ENCODE measurements at regions of chr3 and their contacts with region 1.

Region 1: DNA sequence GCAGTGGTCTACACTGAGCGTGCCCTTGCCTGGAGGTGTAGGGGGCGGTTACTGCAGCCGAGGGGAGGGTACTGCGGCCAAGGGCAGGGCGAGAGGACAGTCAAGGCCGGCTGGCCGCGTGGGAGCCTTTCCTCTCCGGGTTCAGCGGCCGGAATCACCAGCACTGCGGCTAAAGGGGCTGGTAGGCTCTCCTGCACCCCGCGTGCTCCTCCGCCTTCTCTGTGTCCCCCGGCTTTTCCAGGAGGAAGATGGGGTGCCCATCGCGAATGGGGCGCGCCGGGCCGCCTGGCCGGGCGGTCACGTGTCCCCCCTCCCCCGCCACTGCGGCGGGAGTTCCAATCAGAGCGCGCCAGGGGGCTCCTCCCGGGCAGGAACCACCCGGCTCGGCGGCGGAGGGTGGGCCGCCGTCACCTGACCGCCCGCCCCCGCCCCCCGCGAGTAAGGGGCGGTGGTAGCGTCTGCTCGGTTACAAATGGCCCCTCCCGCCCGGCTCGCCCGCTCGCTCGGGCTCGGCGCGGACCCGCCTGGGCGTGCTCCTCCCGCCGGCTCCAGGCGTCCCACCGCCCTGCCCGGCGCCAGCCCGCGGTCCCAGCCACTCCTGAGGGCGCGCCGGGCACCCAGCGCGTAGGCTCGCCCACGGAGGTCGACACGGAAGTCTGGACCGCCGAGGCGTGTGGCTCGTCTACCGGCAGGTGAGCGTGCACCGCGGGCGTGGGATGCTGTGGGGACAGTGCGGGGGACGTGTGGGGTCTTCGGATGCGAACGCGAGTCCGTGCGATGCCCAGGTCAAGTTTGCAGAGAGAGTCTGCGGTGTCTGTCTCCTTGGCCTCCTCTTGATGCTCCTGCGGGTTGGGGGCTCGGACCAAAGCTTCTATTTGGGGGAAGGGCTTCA is 242.6 kb upstream of the TOPAZ1 start:
- DNase-seq: no peak
- ATAC-seq: peak; percentile 22
- H3K4me3 ChIP-seq: peak overlapping the region; percentile 83
- H3K27ac ChIP-seq: no peak overlapping the region; the same call in 1 of the 2 replicates
- H3K4me1 ChIP-seq: peaks cover 15% of the 10 kb centered on the region
- H3K27me3 ChIP-seq: peaks cover 16 to 18% of the 10 kb centered on the region in 2 experiments
- CTCF ChIP-seq: no peak
- EP300 ChIP-seq: no peak
- POLR2A ChIP-seq: peak; percentile 83
- RAD21 ChIP-seq: no peak

Region 2: DNA sequence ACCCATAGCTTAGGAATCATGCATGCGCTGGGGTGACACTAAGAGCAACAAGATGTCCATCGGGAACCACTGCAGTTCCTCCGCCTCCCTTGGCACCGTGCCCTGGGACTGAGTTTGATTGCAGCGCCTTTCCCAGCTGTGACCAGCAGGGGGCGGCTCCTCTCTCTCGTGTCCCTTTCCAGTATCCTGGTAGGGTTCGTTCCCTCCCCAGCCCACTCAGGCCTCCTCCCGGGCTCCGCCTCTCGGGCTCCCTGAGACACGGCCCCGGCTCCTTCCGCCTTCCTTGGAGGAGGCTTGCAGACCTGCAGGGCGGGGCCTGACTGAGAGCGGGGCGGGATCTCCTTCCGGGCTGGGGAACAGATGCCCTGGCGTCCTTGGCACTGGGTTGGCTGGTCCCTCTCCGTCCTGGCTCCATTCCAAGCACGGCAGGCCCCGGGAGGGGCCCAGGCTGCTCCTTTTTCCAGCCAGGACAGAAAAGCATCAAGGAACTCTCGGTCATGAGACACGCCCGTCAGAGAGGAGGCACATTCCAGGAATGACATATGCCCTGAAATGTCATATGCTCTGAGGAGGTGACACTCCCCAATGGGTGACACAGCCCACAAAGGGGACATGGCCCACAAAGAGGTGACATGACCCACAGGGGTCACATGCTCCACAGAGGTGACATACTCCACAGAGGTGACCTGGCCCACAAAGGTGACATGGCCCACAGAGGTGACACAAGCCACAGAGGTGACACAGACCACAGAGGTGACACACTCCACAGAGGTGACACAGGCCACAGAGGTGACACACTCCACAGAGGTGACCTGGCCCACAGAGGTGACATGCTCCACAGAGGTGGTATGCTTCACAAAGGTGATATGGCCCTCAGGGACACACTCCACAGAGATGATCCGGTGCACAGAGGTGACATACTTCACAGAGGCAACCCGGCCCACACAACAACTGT is 229.3 kb before region 1 on chr3:
- CTCF ChIA-PET with region 1: no interaction called
- POLR2A ChIA-PET with region 1: no interaction called
- RAD21 ChIA-PET with region 1: no interaction called
- SMC1A ChIA-PET with region 1: interaction called, 3 read pairs
- in situ Hi-C with region 1: no loop called
- intact Hi-C with region 1: loop called (anchors 10 kb)
- DNase-seq: peak; percentile 15
- ATAC-seq: peak; percentile 84
- H3K4me3 ChIP-seq: no peak overlapping the region
- H3K27ac ChIP-seq: no peak overlapping the region
- H3K4me1 ChIP-seq: no peaks in the 10 kb centered on the region
- H3K27me3 ChIP-seq: no peaks in the 10 kb centered on the region; a peak in 3 of 4 replicates
- CTCF ChIP-seq: peak; percentile 72 to 95 (median 93)
- EP300 ChIP-seq: no peak
- POLR2A ChIP-seq: no peak
- RAD21 ChIP-seq: peak; percentile 57

Region 3: GRCh38 chr3:43894176-43895049 is 104.7 kb before region 1 on chr3:
- CTCF ChIA-PET with region 1: interaction called, 3 read pairs
- POLR2A ChIA-PET with region 1: no interaction called
- RAD21 ChIA-PET with region 1: interaction called, 3 read pairs
- SMC1A ChIA-PET with region 1: no interaction called
- in situ Hi-C with region 1: no loop called
- intact Hi-C with region 1: loop called (anchors 5 kb)
- DNase-seq: no peak
- ATAC-seq: peak; percentile 85
- H3K4me3 ChIP-seq: peak overlapping the region; percentile 69; the same call in 1 of the 2 replicates
- H3K27ac ChIP-seq: no peak overlapping the region
- H3K4me1 ChIP-seq: peaks cover 18% of the 10 kb centered on the region
- H3K27me3 ChIP-seq: peaks cover 0 to 6% of the 10 kb centered on the region in 2 experiments; a peak in 3 of 4 replicates
- CTCF ChIP-seq: 0 out of 6 replicates have a peak, but pooled peaks of 1 of the 3 experiments have one; percentile 13
- EP300 ChIP-seq: no peak
- POLR2A ChIP-seq: no peak
- RAD21 ChIP-seq: no peak

Region 4: DNA sequence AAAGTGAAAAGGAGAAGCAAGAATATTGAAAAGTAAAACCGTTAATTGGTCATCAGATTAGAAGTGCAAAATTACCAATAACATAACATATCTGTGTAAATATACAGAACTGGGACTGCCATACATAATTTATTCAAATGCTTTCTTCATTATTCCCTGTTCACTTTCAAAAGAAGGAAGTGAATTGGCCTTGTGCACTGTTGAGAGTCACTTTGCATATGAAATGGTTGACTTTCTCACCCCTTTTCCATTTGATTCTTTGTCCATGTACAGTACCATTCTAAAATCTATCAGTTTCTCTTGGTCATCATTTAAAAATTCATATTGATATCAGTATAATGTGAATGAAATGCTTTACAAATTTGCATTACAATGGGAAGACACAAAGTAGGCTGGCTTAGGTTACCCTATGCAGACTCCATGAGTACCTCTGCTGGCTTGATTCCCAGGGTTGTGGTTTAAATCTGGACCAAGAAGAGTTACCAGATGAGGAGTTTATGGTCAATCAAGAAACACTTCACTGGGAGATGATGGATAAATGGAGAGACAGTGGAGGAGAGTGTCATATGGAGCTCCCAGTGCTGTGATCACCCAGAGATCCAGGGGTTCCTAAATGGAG is 31.7 kb after region 1 on chr3:
- CTCF ChIA-PET with region 1: no interaction called
- POLR2A ChIA-PET with region 1: interaction called, 10 read pairs
- RAD21 ChIA-PET with region 1: interaction called, 13 read pairs
- SMC1A ChIA-PET with region 1: interaction called, 87 read pairs
- in situ Hi-C with region 1: no loop called
- intact Hi-C with region 1: loop called (anchors 1 kb)
- DNase-seq: no peak
- ATAC-seq: no peak
- H3K4me3 ChIP-seq: peak overlapping the region; percentile 45; the same call in 1 of the 2 replicates
- H3K27ac ChIP-seq: peak overlapping the region; percentile 90
- H3K4me1 ChIP-seq: peaks cover 34% of the 10 kb centered on the region
- H3K27me3 ChIP-seq: no peaks in the 10 kb centered on the region
- CTCF ChIP-seq: no peak
- EP300 ChIP-seq: no peak
- POLR2A ChIP-seq: no peak
- RAD21 ChIP-seq: no peak

Region 5: DNA sequence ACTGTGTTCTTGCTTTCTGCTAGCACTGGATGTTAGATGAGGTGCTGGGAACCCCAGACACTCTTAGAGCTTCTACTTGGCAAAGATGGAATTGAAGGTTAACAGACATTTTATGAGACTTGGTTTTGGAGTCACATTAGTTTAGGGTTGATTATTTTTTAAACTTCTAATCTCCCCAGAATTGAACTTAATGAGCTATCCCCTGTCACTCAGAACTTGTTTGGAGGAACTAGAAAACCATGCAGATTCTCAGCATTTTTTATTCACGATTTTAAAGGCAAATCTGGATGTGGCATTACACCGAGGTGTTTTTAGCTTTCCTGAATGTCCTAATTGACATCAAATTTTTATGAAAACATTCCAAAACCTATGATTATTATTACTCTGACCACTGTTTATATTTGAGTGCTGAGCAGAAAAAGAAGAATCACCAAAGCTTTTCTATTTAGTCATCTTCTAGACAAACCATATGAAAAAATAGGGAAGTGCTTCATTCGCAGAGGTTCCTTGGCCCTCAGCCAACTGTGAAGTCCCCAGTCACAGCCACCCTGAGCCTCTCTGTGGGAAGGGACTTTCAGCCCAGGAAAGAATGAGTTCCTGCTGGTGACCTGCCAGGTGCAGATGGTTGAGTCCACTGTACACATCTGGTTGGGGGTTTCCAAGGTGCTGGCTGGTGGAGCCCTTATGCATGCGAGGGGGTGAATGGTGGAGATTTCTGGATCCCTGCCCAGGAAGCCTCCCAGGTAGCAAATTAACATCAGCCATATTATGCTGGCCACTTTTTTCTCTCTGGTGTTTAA is 46.6 kb after region 1 on chr3:
- CTCF ChIA-PET with region 1: interaction called, 4 read pairs
- POLR2A ChIA-PET with region 1: interaction called, 4 read pairs
- RAD21 ChIA-PET with region 1: interaction called, 20 read pairs
- SMC1A ChIA-PET with region 1: interaction called, 17 read pairs
- in situ Hi-C with region 1: no loop called
- intact Hi-C with region 1: loop called (anchors 2 kb)
- DNase-seq: peak; percentile 98
- ATAC-seq: peak; percentile 93
- H3K4me3 ChIP-seq: no peak overlapping the region
- H3K27ac ChIP-seq: peak overlapping the region; percentile 93
- H3K4me1 ChIP-seq: peaks cover 72% of the 10 kb centered on the region
- H3K27me3 ChIP-seq: no peaks in the 10 kb centered on the region
- CTCF ChIP-seq: no peak
- EP300 ChIP-seq: peak; percentile 81 to 90; a peak in 3 of 4 replicates
- POLR2A ChIP-seq: no peak
- RAD21 ChIP-seq: no peak

Region 6: DNA sequence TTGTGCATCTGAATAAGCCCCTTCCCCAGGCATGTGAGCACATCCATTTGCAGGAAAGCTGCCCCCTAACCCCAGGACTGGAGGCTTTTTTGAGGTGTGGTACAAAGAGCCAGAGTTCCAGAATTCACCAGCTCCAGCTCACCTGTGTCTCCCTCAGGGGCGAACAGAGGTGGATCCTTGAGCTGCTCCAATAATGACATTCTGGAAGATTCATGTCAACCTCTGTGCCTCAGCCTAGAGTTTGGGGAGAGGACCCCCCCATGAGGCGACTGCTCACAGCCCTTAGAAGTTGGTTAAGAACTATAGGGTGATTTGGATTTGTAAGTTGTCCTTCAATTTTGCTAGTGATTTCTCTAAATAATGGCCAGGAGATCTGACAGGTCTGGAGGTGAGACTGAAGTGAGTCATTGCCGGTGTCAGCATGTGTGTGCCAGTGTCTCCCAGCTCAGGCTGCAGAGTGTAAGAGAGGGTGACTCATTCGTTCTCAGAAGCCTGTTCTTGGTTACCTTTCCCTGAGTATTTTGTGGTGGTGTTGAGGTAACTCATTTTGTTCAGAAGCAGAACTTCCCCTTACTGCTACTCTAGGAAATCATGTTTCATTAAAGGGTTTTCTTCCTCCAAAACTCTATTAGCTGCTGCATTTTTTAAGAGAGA is 105.7 kb after region 1 on chr3:
- CTCF ChIA-PET with region 1: interaction called, 3 read pairs
- POLR2A ChIA-PET with region 1: interaction called, 4 read pairs
- RAD21 ChIA-PET with region 1: interaction called, 11 read pairs
- SMC1A ChIA-PET with region 1: interaction called, 7 read pairs
- in situ Hi-C with region 1: no loop called
- intact Hi-C with region 1: no loop called
- DNase-seq: peak; percentile 81
- ATAC-seq: peak; percentile 99
- H3K4me3 ChIP-seq: no peak overlapping the region
- H3K27ac ChIP-seq: peak overlapping the region; percentile 58; the same call in 1 of the 2 replicates
- H3K4me1 ChIP-seq: peaks cover 20% of the 10 kb centered on the region
- H3K27me3 ChIP-seq: no peaks in the 10 kb centered on the region; a peak in 1 of 4 replicates
- CTCF ChIP-seq: no peak
- EP300 ChIP-seq: peak in 1 of 2 experiments; percentile 49; a peak in 1 of 4 replicates
- POLR2A ChIP-seq: no peak
- RAD21 ChIP-seq: no peak

Region 7: DNA sequence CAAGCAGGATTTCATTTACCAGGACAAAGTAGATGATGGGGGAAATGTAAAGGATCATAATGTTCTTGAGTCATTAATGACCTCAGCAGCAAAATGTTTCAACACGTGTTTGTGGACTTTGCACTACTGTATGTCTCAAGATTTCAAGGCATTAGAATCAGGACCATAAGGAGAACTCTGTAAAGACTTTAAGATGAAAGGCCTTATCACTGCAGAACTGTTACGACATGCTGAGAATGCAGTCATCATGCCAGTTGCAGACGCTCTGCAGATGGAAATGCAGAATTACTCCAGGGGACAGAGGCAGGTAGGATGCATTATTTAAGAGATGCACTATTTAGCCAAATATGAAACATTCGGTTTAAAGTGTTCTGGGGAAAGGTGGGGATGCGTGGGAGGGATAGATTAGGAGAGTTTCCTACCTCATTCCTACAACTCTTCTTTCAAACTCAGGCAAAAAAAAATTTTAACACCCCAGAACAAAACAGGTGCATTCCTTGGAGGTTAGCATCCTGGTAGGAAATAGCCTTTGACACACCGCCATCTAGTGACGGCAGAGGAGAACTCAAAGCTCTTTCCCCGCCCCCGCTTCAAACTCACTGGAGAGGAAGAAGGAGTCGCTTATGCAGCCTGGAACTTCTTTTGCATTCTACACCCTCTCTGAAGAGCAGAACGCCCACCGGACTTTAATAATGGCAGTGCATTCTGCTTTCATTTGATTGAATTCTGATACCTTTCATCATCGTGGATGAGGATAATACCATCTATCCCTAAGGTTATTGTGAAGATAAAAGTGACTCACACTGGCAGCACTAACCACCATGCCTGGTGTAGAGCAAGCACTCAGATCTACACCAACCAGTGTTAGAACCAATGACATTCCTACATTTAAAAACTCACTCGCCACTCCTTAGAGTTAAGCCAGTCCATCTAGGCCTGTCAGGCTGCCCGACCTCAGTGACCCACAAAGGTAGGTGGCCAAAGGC is 199.5 kb after region 1 on chr3:
- CTCF ChIA-PET with region 1: interaction called, 12 read pairs
- POLR2A ChIA-PET with region 1: no interaction called
- RAD21 ChIA-PET with region 1: interaction called, 20 read pairs
- SMC1A ChIA-PET with region 1: interaction called, 16 read pairs
- in situ Hi-C with region 1: loop called (anchors 10 kb)
- intact Hi-C with region 1: loop called (anchors 1 kb)
- DNase-seq: peak; percentile 26
- ATAC-seq: peak; percentile 96
- H3K4me3 ChIP-seq: no peak overlapping the region
- H3K27ac ChIP-seq: no peak overlapping the region
- H3K4me1 ChIP-seq: no peaks in the 10 kb centered on the region
- H3K27me3 ChIP-seq: no peaks in the 10 kb centered on the region; a peak in 2 of 4 replicates
- CTCF ChIP-seq: peak; percentile 82 to 90 (median 83)
- EP300 ChIP-seq: no peak
- POLR2A ChIP-seq: no peak
- RAD21 ChIP-seq: peak; percentile 97

Region 8: GRCh38 chr3:44669760-44670159 is 670.7 kb after region 1 on chr3:
- CTCF ChIA-PET with region 1: no interaction called
- POLR2A ChIA-PET with region 1: no interaction called
- RAD21 ChIA-PET with region 1: no interaction called
- SMC1A ChIA-PET with region 1: no interaction called
- in situ Hi-C with region 1: no loop called
- intact Hi-C with region 1: no loop called
- DNase-seq: no peak
- ATAC-seq: no peak
- H3K4me3 ChIP-seq: no peak overlapping the region
- H3K27ac ChIP-seq: no peak overlapping the region
- H3K4me1 ChIP-seq: no peaks in the 10 kb centered on the region
- H3K27me3 ChIP-seq: no peaks in the 10 kb centered on the region
- CTCF ChIP-seq: no peak
- EP300 ChIP-seq: no peak
- POLR2A ChIP-seq: no peak; the same call in 1 of the 2 replicates
- RAD21 ChIP-seq: no peak